CD4-positive, alpha-beta T cell (primary cell): ENCODE measurements at regions of chr10 and their contacts with region 1.

Region 1: DNA sequence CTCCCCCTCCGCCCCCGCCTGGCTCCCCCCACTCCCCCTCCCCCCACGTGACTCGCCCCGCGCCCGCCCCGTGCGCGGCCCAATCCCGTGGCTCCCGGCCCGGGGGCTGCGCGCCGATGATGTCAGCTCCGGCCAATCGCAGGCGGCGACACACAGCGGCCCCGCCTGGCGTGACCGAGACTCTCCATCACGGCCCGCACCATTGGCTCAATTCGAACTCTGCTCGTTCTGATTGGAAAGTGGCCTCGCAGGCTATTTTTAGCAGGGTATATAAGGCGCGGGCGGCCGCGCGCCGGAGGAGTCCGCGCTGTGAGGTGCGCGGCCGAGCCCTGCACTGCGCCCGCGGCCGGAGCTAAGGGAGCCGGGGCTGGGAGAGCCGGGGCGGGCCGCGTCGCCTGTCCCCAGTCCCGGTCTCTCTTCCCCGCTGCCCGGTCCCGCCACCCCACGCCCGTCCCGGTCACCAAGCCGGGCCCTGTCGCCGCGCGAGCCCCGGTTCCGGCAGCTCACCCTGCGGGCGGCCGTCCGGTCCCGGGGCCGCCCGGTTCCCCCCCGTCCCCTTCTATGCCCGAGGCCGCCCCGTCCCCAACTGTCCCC is 345 bp upstream of the KLF6 start:
- DNase-seq: peak; percentile 99 to 100 (median 99)
- ATAC-seq: peak; percentile 71
- H3K4me3 ChIP-seq: peak overlapping the region; percentile 80
- H3K4me3 Mint-ChIP-seq: peak overlapping the region; percentile 98
- H3K27ac ChIP-seq: peak overlapping the region; percentile 99 to 100
- H3K27ac Mint-ChIP-seq: peak overlapping the region; percentile 97
- H3K4me1 ChIP-seq: peaks cover 38% of the 10 kb centered on the region
- H3K4me1 Mint-ChIP-seq: peaks cover 44% of the 10 kb centered on the region
- H3K27me3 ChIP-seq: no peaks in the 10 kb centered on the region
- H3K27me3 Mint-ChIP-seq: no peaks in the 10 kb centered on the region
- CTCF ChIP-seq: no peak

Region 2: GRCh38 chr10:3452173-3452626 is 333.2 kb before region 1 on chr10:
- CTCF ChIA-PET with region 1: no interaction called
- POLR2A ChIA-PET with region 1: interaction called, 17 read pairs
- intact Hi-C with region 1: loop called in 1 of 2 experiments (anchors 5 kb)
- DNase-seq: peak in 1 of 14 experiments; percentile 32
- ATAC-seq: peak; percentile 64
- H3K4me3 ChIP-seq: no peak overlapping the region
- H3K4me3 Mint-ChIP-seq: no peak overlapping the region
- H3K27ac ChIP-seq: no peak overlapping the region
- H3K27ac Mint-ChIP-seq: peak overlapping the region; percentile 77
- H3K4me1 ChIP-seq: peaks cover 5% of the 10 kb centered on the region
- H3K4me1 Mint-ChIP-seq: peaks cover 30% of the 10 kb centered on the region
- H3K27me3 ChIP-seq: no peaks in the 10 kb centered on the region
- H3K27me3 Mint-ChIP-seq: peaks cover 2% of the 10 kb centered on the region
- CTCF ChIP-seq: peak; percentile 38

Region 3: GRCh38 chr10:3525832-3526449 is 259.4 kb before region 1 on chr10:
- CTCF ChIA-PET with region 1: no interaction called
- POLR2A ChIA-PET with region 1: no interaction called
- intact Hi-C with region 1: no loop called
- DNase-seq: no peak
- ATAC-seq: no peak
- H3K4me3 ChIP-seq: no peak overlapping the region
- H3K4me3 Mint-ChIP-seq: no peak overlapping the region
- H3K27ac ChIP-seq: no peak overlapping the region
- H3K27ac Mint-ChIP-seq: no peak overlapping the region
- H3K4me1 ChIP-seq: no peaks in the 10 kb centered on the region
- H3K4me1 Mint-ChIP-seq: no peaks in the 10 kb centered on the region
- H3K27me3 ChIP-seq: no peaks in the 10 kb centered on the region
- H3K27me3 Mint-ChIP-seq: no peaks in the 10 kb centered on the region
- CTCF ChIP-seq: no peak

Region 4: DNA sequence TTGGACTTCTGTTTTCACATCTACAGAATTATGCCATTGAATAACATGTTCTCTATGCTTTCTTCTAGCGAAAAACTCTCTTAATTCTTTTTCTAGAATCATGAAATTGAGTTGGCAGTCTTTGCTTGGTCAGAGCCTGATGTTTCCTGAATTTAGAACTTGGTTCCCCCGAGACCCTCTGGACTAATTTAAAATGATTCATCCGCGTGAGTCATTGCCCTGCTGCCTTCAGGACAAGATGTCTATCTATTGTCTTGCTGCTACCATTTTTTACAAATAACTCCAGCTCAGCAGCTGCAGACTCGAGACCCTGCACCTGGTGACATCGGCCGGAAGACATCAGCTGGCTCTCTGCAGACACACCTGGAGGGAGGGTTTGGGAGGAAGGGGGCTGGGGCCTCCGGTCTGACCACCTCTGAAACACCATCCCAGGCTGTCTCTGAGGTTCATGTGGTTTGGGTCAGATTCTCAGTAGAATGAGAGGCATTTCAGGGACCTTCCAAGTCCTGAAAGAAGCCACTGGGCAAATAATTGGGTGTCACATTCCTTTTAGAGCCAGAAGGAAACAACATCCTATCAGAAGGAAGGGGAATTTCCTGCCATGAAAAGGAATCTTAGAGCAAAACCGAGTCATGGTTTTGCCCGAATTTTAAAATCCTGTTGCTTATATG is 20.6 kb after region 1 on chr10:
- CTCF ChIA-PET with region 1: interaction called, 10 read pairs
- POLR2A ChIA-PET with region 1: interaction called, 497 read pairs
- intact Hi-C with region 1: loop called (anchors 1 kb)
- DNase-seq: peak in 11 of 14 experiments; percentile 38 to 85 (median 57)
- ATAC-seq: peak; percentile 2
- H3K4me3 ChIP-seq: peak overlapping the region; percentile 1
- H3K4me3 Mint-ChIP-seq: peak overlapping the region; percentile 66
- H3K27ac ChIP-seq: peak overlapping the region; percentile 97 to 98
- H3K27ac Mint-ChIP-seq: no peak overlapping the region
- H3K4me1 ChIP-seq: peaks cover 90% of the 10 kb centered on the region
- H3K4me1 Mint-ChIP-seq: peaks cover 14% of the 10 kb centered on the region
- H3K27me3 ChIP-seq: no peaks in the 10 kb centered on the region
- H3K27me3 Mint-ChIP-seq: no peaks in the 10 kb centered on the region
- CTCF ChIP-seq: no peak

Region 5: GRCh38 chr10:3835770-3836169 is 50.4 kb after region 1 on chr10:
- CTCF ChIA-PET with region 1: no interaction called
- POLR2A ChIA-PET with region 1: interaction called, 47 read pairs
- intact Hi-C with region 1: no loop called
- DNase-seq: peak in 2 of 14 experiments; percentile 58 to 69
- ATAC-seq: no peak
- H3K4me3 ChIP-seq: no peak overlapping the region
- H3K4me3 Mint-ChIP-seq: peak overlapping the region; percentile 3
- H3K27ac ChIP-seq: no peak overlapping the region
- H3K27ac Mint-ChIP-seq: no peak overlapping the region
- H3K4me1 ChIP-seq: peaks cover 11% of the 10 kb centered on the region
- H3K4me1 Mint-ChIP-seq: peaks cover 7% of the 10 kb centered on the region
- H3K27me3 ChIP-seq: no peaks in the 10 kb centered on the region
- H3K27me3 Mint-ChIP-seq: no peaks in the 10 kb centered on the region
- CTCF ChIP-seq: no peak

Region 6: DNA sequence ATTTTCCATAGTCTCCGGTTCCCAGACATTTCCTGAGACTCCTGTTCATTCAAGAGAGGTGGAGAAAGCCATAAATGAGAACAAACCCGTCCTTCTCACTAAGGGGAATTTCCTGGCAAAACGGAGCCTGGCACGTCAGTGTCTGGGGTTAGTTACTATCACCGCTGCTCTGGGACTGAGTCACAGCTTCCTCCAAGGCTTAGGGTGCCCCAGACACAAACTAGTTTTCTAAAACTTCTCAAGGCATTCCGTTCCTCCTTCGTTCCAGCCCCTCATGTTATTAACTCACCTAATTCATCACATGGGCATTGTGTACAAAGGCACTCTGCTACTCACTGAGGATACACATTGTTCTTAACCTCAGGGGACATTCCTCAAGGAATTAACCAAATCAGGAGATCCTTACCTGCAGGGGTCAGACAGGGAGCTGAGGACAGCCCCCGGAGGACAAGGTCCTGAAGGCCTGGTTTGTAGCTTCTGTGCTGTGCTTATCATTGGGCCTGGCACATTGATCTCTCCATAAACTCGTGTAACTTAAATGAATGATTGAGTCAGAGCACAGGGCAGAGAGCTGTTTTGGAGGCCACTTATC is 102.6 kb after region 1 on chr10:
- CTCF ChIA-PET with region 1: interaction called, 3 read pairs
- POLR2A ChIA-PET with region 1: interaction called, 83 read pairs
- intact Hi-C with region 1: no loop called
- DNase-seq: peak in 13 of 14 experiments; percentile 34 to 94 (median 50)
- ATAC-seq: peak; percentile 77
- H3K4me3 ChIP-seq: peak overlapping the region; percentile 15
- H3K4me3 Mint-ChIP-seq: peak overlapping the region; percentile 55
- H3K27ac ChIP-seq: peak overlapping the region; percentile 24 to 82
- H3K27ac Mint-ChIP-seq: peak overlapping the region; percentile 92
- H3K4me1 ChIP-seq: peaks cover 40% of the 10 kb centered on the region
- H3K4me1 Mint-ChIP-seq: peaks cover 27% of the 10 kb centered on the region
- H3K27me3 ChIP-seq: no peaks in the 10 kb centered on the region
- H3K27me3 Mint-ChIP-seq: no peaks in the 10 kb centered on the region
- CTCF ChIP-seq: no peak

Region 7: GRCh38 chr10:3948843-3949242 is 163.5 kb after region 1 on chr10:
- CTCF ChIA-PET with region 1: no interaction called
- POLR2A ChIA-PET with region 1: interaction called, 59 read pairs
- intact Hi-C with region 1: loop called (anchors 5 to 10 kb)
- DNase-seq: peak; percentile 53 to 95 (median 77)
- ATAC-seq: peak; percentile 89
- H3K4me3 ChIP-seq: peak overlapping the region; percentile 3
- H3K4me3 Mint-ChIP-seq: peak overlapping the region; percentile 69
- H3K27ac ChIP-seq: peak overlapping the region; percentile 31 to 67
- H3K27ac Mint-ChIP-seq: peak overlapping the region; percentile 88
- H3K4me1 ChIP-seq: peaks cover 53% of the 10 kb centered on the region
- H3K4me1 Mint-ChIP-seq: peaks cover 45% of the 10 kb centered on the region
- H3K27me3 ChIP-seq: no peaks in the 10 kb centered on the region
- H3K27me3 Mint-ChIP-seq: no peaks in the 10 kb centered on the region
- CTCF ChIP-seq: no peak

Region 8: GRCh38 chr10:3980660-3981059 is 195.3 kb after region 1 on chr10:
- CTCF ChIA-PET with region 1: no interaction called
- POLR2A ChIA-PET with region 1: interaction called, 40 read pairs
- intact Hi-C with region 1: no loop called
- DNase-seq: peak in 3 of 14 experiments; percentile 21 to 64 (median 26)
- ATAC-seq: peak; percentile 20
- H3K4me3 ChIP-seq: no peak overlapping the region
- H3K4me3 Mint-ChIP-seq: peak overlapping the region; percentile 64
- H3K27ac ChIP-seq: peak overlapping the region in 1 of 2 donors; percentile 4
- H3K27ac Mint-ChIP-seq: peak overlapping the region; percentile 61
- H3K4me1 ChIP-seq: peaks cover 51% of the 10 kb centered on the region
- H3K4me1 Mint-ChIP-seq: peaks cover 4% of the 10 kb centered on the region
- H3K27me3 ChIP-seq: no peaks in the 10 kb centered on the region
- H3K27me3 Mint-ChIP-seq: no peaks in the 10 kb centered on the region
- CTCF ChIP-seq: no peak

Region 9: GRCh38 chr10:3992382-3993178 is 207.2 kb after region 1 on chr10:
- CTCF ChIA-PET with region 1: no interaction called
- POLR2A ChIA-PET with region 1: no interaction called
- intact Hi-C with region 1: no loop called
- DNase-seq: no peak
- ATAC-seq: no peak
- H3K4me3 ChIP-seq: no peak overlapping the region
- H3K4me3 Mint-ChIP-seq: no peak overlapping the region
- H3K27ac ChIP-seq: no peak overlapping the region
- H3K27ac Mint-ChIP-seq: no peak overlapping the region
- H3K4me1 ChIP-seq: no peaks in the 10 kb centered on the region
- H3K4me1 Mint-ChIP-seq: peaks cover 5% of the 10 kb centered on the region
- H3K27me3 ChIP-seq: no peaks in the 10 kb centered on the region
- H3K27me3 Mint-ChIP-seq: no peaks in the 10 kb centered on the region
- CTCF ChIP-seq: no peak